ENCODE measurements at regions of chr1 and their contacts with region 1.

Region 1: GRCh38 chr1:223133824-223134435 is 9.1 kb downstream of the TLR5 start:
- DNase-seq: peak; percentile 89 to 90
- H3K4me3 ChIP-seq: peak overlapping the region in 2 of 3 donors; percentile 2 to 10
- H3K27ac ChIP-seq: peak overlapping the region; percentile 75 to 82 (median 81)
- H3K4me1 ChIP-seq: peaks cover 11 to 42% of the 10 kb centered on the region in 2 donors
- H3K27me3 ChIP-seq: no peaks in the 10 kb centered on the region
- CTCF ChIP-seq: peak in 5 of 6 experiments; percentile 90 to 96 (median 93)
- POLR2A ChIP-seq: peak in 1 of 2 donors; percentile 63

Region 2: GRCh38 chr1:222792744-222793143 is 341.2 kb before region 1 on chr1:
- intact Hi-C with region 1: loop called (anchors 10 kb)
- DNase-seq: no peak
- H3K4me3 ChIP-seq: no peak overlapping the region
- H3K27ac ChIP-seq: no peak overlapping the region
- H3K4me1 ChIP-seq: peaks cover 0 to 6% of the 10 kb centered on the region in 2 donors
- H3K27me3 ChIP-seq: no peaks in the 10 kb centered on the region
- CTCF ChIP-seq: peak in 4 of 6 experiments; percentile 53 to 87 (median 69)
- POLR2A ChIP-seq: no peak

Region 3: GRCh38 chr1:223374064-223374610 is 240.2 kb after region 1 on chr1:
- intact Hi-C with region 1: no loop called
- DNase-seq: no peak
- H3K4me3 ChIP-seq: no peak overlapping the region
- H3K27ac ChIP-seq: no peak overlapping the region
- H3K4me1 ChIP-seq: no peaks in the 10 kb centered on the region
- H3K27me3 ChIP-seq: no peaks in the 10 kb centered on the region
- CTCF ChIP-seq: no peak
- POLR2A ChIP-seq: no peak

Region 4: GRCh38 chr1:223683586-223684487 is 549.9 kb after region 1 on chr1:
- intact Hi-C with region 1: loop called (anchors 10 kb)
- DNase-seq: peak; percentile 79 to 80
- H3K4me3 ChIP-seq: no peak overlapping the region
- H3K27ac ChIP-seq: no peak overlapping the region
- H3K4me1 ChIP-seq: no peaks in the 10 kb centered on the region
- H3K27me3 ChIP-seq: no peaks in the 10 kb centered on the region
- CTCF ChIP-seq: peak in 5 of 6 experiments; percentile 31 to 87 (median 67)
- POLR2A ChIP-seq: no peak